ENCODE measurements at regions of chr10 and their contacts with region 1.

Region 1: GRCh38 chr10:47361293-47361692 is 13.1 kb downstream of the RBP3 start:
- DNase-seq: peak in 6 of 10 donors; percentile 10 to 65 (median 48)
- H3K4me3 ChIP-seq: no peak overlapping the region
- H3K27ac ChIP-seq: no peak overlapping the region
- H3K27me3 ChIP-seq: no peaks in the 10 kb centered on the region
- CTCF ChIP-seq: peak; percentile 50 to 89 (median 78)

Region 2: GRCh38 chr10:47458466-47459154 is 97.3 kb after region 1 on chr10:
- intact Hi-C with region 1: loop called in 1 of 2 experiments (anchors 10 kb)
- DNase-seq: no peak
- H3K4me3 ChIP-seq: no peak overlapping the region
- H3K27ac ChIP-seq: no peak overlapping the region
- H3K27me3 ChIP-seq: no peaks in the 10 kb centered on the region
- CTCF ChIP-seq: no peak